ENCODE measurements at regions of chr6 and their contacts with region 1.

Region 1: GRCh38 chr6:112325444-112325843 is 21.7 kb upstream of the RFPL4B start:
- DNase-seq: no peak
- H3K4me3 ChIP-seq: no peak overlapping the region
- H3K27ac ChIP-seq: no peak overlapping the region
- H3K4me1 ChIP-seq: no peaks in the 10 kb centered on the region
- H3K27me3 ChIP-seq: no peaks in the 10 kb centered on the region
- CTCF ChIP-seq: no peak
- POLR2A ChIP-seq: no peak

Region 2: GRCh38 chr6:112373866-112374520 is 48.5 kb after region 1 on chr6:
- intact Hi-C with region 1: loop called (anchors 2 kb)
- DNase-seq: no peak
- H3K4me3 ChIP-seq: no peak overlapping the region
- H3K27ac ChIP-seq: no peak overlapping the region
- H3K4me1 ChIP-seq: no peaks in the 10 kb centered on the region
- H3K27me3 ChIP-seq: no peaks in the 10 kb centered on the region
- CTCF ChIP-seq: no peak
- POLR2A ChIP-seq: no peak

Measured in breast epithelium (tissue), 4 donors.